ENCODE measurements at regions of chr5 and their contacts with region 1.

Region 1: GRCh38 chr5:40679155-40679913 is 381 bp upstream of the PTGER4 start:
- DNase-seq: peak; percentile 92
- ATAC-seq: peak; percentile 69
- H3K4me3 Mint-ChIP-seq: peak overlapping the region; percentile 95
- H3K27ac Mint-ChIP-seq: peak overlapping the region; percentile 94
- H3K4me1 Mint-ChIP-seq: peaks cover 42% of the 10 kb centered on the region
- H3K27me3 Mint-ChIP-seq: no peaks in the 10 kb centered on the region

Region 2: GRCh38 chr5:40404613-40405012 is 274.7 kb before region 1 on chr5:
- POLR2A ChIA-PET with region 1: interaction called, 27 read pairs
- DNase-seq: no peak
- ATAC-seq: peak; percentile 66
- H3K4me3 Mint-ChIP-seq: peak overlapping the region; percentile 47
- H3K27ac Mint-ChIP-seq: peak overlapping the region; percentile 99
- H3K4me1 Mint-ChIP-seq: peaks cover 68% of the 10 kb centered on the region
- H3K27me3 Mint-ChIP-seq: no peaks in the 10 kb centered on the region

Region 3: DNA sequence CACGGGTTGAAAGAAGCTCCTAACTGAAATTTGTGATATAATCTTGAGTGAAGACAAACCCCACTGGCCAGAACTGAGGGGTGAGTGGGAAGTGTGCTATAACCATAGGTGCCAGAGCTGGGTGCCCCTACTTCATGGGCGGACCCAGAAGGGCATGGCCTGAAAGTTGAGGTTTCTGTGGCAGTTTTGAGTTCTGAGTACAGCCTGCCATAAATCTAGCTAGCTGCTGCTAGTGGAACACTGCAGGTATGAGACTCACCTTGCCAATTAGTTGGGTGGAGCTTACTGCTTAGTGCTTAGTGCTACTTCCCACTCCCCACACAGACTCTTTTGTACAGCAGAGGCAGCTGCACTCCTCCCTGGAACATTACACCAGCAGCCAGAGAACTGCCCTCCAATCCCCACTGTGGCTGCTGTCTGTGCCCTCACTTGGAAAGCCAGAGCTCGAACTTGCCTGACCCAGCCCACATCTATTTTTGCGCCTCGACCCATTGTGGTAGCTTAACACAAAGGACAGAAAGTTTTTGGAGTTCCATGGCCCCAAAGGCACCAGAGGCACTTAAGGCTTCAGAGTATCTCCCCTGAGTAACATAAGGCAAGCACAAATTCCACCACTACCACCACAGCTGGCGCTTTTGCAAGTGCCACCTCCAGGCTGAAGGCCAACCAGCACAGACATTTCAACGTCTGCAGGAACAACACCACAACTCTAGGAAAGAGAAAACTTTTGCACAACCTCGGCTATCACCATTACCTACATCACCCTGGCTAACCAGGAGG is 26.7 kb before region 1 on chr5:
- POLR2A ChIA-PET with region 1: interaction called, 83 read pairs
- DNase-seq: peak; percentile 41
- ATAC-seq: peak; percentile 49
- H3K4me3 Mint-ChIP-seq: peak overlapping the region; percentile 95
- H3K27ac Mint-ChIP-seq: peak overlapping the region; percentile 98
- H3K4me1 Mint-ChIP-seq: peaks cover 64% of the 10 kb centered on the region
- H3K27me3 Mint-ChIP-seq: no peaks in the 10 kb centered on the region

Region 4: GRCh38 chr5:40736103-40736875 is 57.0 kb after region 1 on chr5:
- POLR2A ChIA-PET with region 1: no interaction called
- DNase-seq: no peak
- ATAC-seq: peak; percentile 52
- H3K4me3 Mint-ChIP-seq: no peak overlapping the region
- H3K27ac Mint-ChIP-seq: no peak overlapping the region
- H3K4me1 Mint-ChIP-seq: peaks cover 21% of the 10 kb centered on the region
- H3K27me3 Mint-ChIP-seq: no peaks in the 10 kb centered on the region